Dorsolateral prefrontal cortex (tissue), 120 donors: ENCODE measurements at regions of chr1 and their contacts with region 1.

Region 1: GRCh38 chr1:26279456-26280332 is at the start of gene SH3BGRL3:
- DNase-seq: peak; percentile 69 to 93 (median 84)
- H3K4me3 ChIP-seq: peak within 1 kb of the TSS; percentile 58 to 97 (median 89)
- H3K27ac ChIP-seq: peak within 1 kb of the TSS; percentile 58 to 98 (median 93)
- H3K27me3 ChIP-seq: no peaks in the 10 kb centered on the region
- CTCF ChIP-seq: peak in 49 of 56 donors; percentile 14 to 66 (median 37)
- total RNA-seq, gene SH3BGRL3: 50.9 to 144 (median 80.6) TPM

Region 2: GRCh38 chr1:26169669-26170471 is 109.8 kb before region 1 on chr1 and contains the start of gene ZNF593:
- intact Hi-C with region 1: loop called in 1 of 2 experiments (anchors 5 kb)
- DNase-seq: peak; percentile 87 to 97 (median 93)
- H3K4me3 ChIP-seq: peak within 1 kb of the TSS; percentile 50 to 99 (median 91)
- H3K27ac ChIP-seq: peak within 1 kb of the TSS in 55 of 59 donors; percentile 2 to 87 (median 65)
- H3K27me3 ChIP-seq: no peaks in the 10 kb centered on the region
- CTCF ChIP-seq: peak; percentile 77 to 99 (median 95)
- total RNA-seq, gene ZNF593: 10.6 to 30.1 (median 17.6) TPM

Region 3: GRCh38 chr1:26363549-26364448 is 84.1 kb after region 1 on chr1:
- intact Hi-C with region 1: no loop called
- DNase-seq: peak; percentile 33 to 69 (median 60)
- H3K4me3 ChIP-seq: no peak overlapping the region
- H3K27ac ChIP-seq: no peak overlapping the region
- H3K27me3 ChIP-seq: peaks cover 0 to 59% (median 28%) of the 10 kb centered on the region in 45 donors
- CTCF ChIP-seq: peak; percentile 35 to 90 (median 77)